IMR-90 (cell line): ENCODE measurements at regions of chr2 and their contacts with region 1.

Region 1: GRCh38 chr2:182132605-182133004 is 147.0 kb downstream of the PPP1R1C start:
- DNase-seq: peak; percentile 53
- ATAC-seq: peak; percentile 62; the same call in 1 of the 2 replicates
- H3K4me3 ChIP-seq: no peak overlapping the region
- H3K27ac ChIP-seq: no peak overlapping the region
- H3K4me1 ChIP-seq: peaks cover 10% of the 10 kb centered on the region
- H3K27me3 ChIP-seq: no peaks in the 10 kb centered on the region
- CTCF ChIP-seq: peak; percentile 63
- POLR2A ChIP-seq: no peak
- RAD21 ChIP-seq: peak; percentile 75

Region 2: GRCh38 chr2:181077128-181077709 is 1055.4 kb before region 1 on chr2:
- CTCF ChIA-PET with region 1: no interaction called
- POLR2A ChIA-PET with region 1: no interaction called
- dilution Hi-C with region 1: no loop called
- in situ Hi-C with region 1: no loop called
- intact Hi-C with region 1: loop called (anchors 1 kb)
- DNase-seq: peak; percentile 62
- ATAC-seq: peak; percentile 66
- H3K4me3 ChIP-seq: no peak overlapping the region
- H3K27ac ChIP-seq: no peak overlapping the region
- H3K4me1 ChIP-seq: peaks cover 3% of the 10 kb centered on the region
- H3K27me3 ChIP-seq: no peaks in the 10 kb centered on the region
- CTCF ChIP-seq: peak; percentile 66
- POLR2A ChIP-seq: no peak
- RAD21 ChIP-seq: peak; percentile 61

Region 3: GRCh38 chr2:181466661-181467576 is 665.7 kb before region 1 on chr2:
- CTCF ChIA-PET with region 1: no interaction called
- POLR2A ChIA-PET with region 1: no interaction called
- dilution Hi-C with region 1: no loop called
- in situ Hi-C with region 1: no loop called
- intact Hi-C with region 1: loop called (anchors 10 kb)
- DNase-seq: peak; percentile 63
- ATAC-seq: peak; percentile 63; the same call in 1 of the 2 replicates
- H3K4me3 ChIP-seq: no peak overlapping the region
- H3K27ac ChIP-seq: no peak overlapping the region
- H3K4me1 ChIP-seq: no peaks in the 10 kb centered on the region
- H3K27me3 ChIP-seq: no peaks in the 10 kb centered on the region
- CTCF ChIP-seq: peak; percentile 75
- POLR2A ChIP-seq: no peak
- RAD21 ChIP-seq: peak; percentile 63

Region 4: GRCh38 chr2:181586569-181587081 is 546.0 kb before region 1 on chr2:
- CTCF ChIA-PET with region 1: no interaction called
- POLR2A ChIA-PET with region 1: no interaction called
- dilution Hi-C with region 1: no loop called
- in situ Hi-C with region 1: loop called (anchors 25 kb)
- intact Hi-C with region 1: no loop called
- DNase-seq: no peak
- ATAC-seq: no peak
- H3K4me3 ChIP-seq: no peak overlapping the region
- H3K27ac ChIP-seq: no peak overlapping the region
- H3K4me1 ChIP-seq: no peaks in the 10 kb centered on the region
- H3K27me3 ChIP-seq: peaks cover 5% of the 10 kb centered on the region
- CTCF ChIP-seq: no peak
- POLR2A ChIP-seq: no peak
- RAD21 ChIP-seq: no peak

Region 5: DNA sequence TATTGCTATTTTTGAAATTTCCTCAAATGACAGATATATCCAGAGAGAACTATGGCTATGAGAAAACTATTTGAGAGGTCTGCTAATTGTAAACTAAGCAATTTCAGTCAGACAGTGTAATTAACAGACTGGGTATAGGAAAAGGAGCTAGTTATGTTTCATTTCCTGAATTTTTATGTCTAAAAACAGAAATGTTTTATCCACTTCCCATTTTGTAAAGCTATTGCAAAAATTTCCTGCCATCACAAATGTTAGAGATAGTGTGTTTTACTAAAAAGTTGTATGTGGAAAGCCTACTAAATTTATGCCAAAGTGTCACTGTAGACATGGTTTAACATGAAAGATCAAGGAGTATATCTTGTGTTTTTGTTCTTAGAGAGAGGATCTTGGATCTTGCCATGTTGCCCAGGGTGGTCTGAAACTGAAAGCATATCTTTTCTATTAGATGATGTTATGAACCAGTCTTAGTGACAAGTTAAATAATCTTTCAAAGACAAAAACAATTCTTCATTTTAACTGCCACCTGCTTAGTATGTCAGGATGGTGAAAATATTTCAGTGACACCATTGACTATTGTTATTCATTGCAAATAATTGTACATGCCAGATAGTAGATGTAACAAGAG is 281.6 kb before region 1 on chr2:
- CTCF ChIA-PET with region 1: no interaction called
- POLR2A ChIA-PET with region 1: no interaction called
- dilution Hi-C with region 1: no loop called
- in situ Hi-C with region 1: no loop called
- intact Hi-C with region 1: no loop called
- DNase-seq: no peak
- ATAC-seq: no peak
- H3K4me3 ChIP-seq: no peak overlapping the region
- H3K27ac ChIP-seq: no peak overlapping the region
- H3K4me1 ChIP-seq: no peaks in the 10 kb centered on the region
- H3K27me3 ChIP-seq: no peaks in the 10 kb centered on the region
- CTCF ChIP-seq: no peak
- POLR2A ChIP-seq: no peak
- RAD21 ChIP-seq: no peak

Region 6: GRCh38 chr2:182088681-182089320 is 43.8 kb before region 1 on chr2:
- CTCF ChIA-PET with region 1: no interaction called
- POLR2A ChIA-PET with region 1: no interaction called
- dilution Hi-C with region 1: no loop called
- in situ Hi-C with region 1: no loop called
- intact Hi-C with region 1: loop called (anchors 5 kb)
- DNase-seq: peak; percentile 45
- ATAC-seq: peak; percentile 73
- H3K4me3 ChIP-seq: no peak overlapping the region
- H3K27ac ChIP-seq: peak overlapping the region; percentile 95
- H3K4me1 ChIP-seq: peaks cover 7% of the 10 kb centered on the region
- H3K27me3 ChIP-seq: no peaks in the 10 kb centered on the region
- CTCF ChIP-seq: no peak
- POLR2A ChIP-seq: no peak
- RAD21 ChIP-seq: no peak